ENCODE measurements at regions of chr15 and their contacts with region 1.

Region 1: DNA sequence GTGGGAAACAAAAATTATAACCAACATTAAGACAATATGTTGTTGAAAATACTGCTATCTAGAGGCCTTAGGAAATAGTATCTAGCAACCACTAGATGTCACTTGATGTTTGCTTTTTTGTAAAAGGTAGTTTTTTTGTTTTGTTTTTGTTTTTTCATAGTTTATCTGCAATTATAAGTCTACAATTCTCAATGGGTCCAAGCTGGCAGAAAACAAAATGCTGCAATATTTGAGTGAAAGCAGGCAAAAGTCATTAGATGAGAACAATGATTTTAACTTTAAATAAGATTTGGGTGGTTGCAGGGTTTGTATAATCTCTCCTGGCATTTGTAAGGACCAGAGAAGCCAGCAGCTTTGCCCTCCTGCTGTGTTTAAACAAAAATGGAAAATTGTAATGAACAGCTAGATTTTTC is 27.0 kb downstream of the DUT start:
- DNase-seq: no peak
- H3K4me3 ChIP-seq: no peak overlapping the region
- H3K27ac ChIP-seq: peak overlapping the region in 1 of 3 donors; percentile 3
- H3K4me1 ChIP-seq: no peaks in the 10 kb centered on the region
- H3K27me3 ChIP-seq: no peaks in the 10 kb centered on the region
- CTCF ChIP-seq: peak in 4 of 6 experiments; percentile 23 to 79 (median 64)
- POLR2A ChIP-seq: no peak

Region 2: GRCh38 chr15:48536681-48537091 is 178.5 kb after region 1 on chr15:
- intact Hi-C with region 1: no loop called
- DNase-seq: no peak
- H3K4me3 ChIP-seq: no peak overlapping the region
- H3K27ac ChIP-seq: peak overlapping the region in 2 of 3 donors; percentile 19 to 70
- H3K4me1 ChIP-seq: peaks cover 22 to 24% of the 10 kb centered on the region in 2 donors
- H3K27me3 ChIP-seq: no peaks in the 10 kb centered on the region
- CTCF ChIP-seq: no peak
- POLR2A ChIP-seq: no peak

Region 3: GRCh38 chr15:48855501-48856440 is 497.5 kb after region 1 on chr15:
- intact Hi-C with region 1: loop called (anchors 5 kb)
- DNase-seq: peak; percentile 36 to 41
- H3K4me3 ChIP-seq: no peak overlapping the region
- H3K27ac ChIP-seq: no peak overlapping the region
- H3K4me1 ChIP-seq: no peaks in the 10 kb centered on the region
- H3K27me3 ChIP-seq: no peaks in the 10 kb centered on the region
- CTCF ChIP-seq: peak in 4 of 6 experiments; percentile 55 to 75 (median 64)
- POLR2A ChIP-seq: no peak

Measured in thyroid gland (tissue), 4 donors.